ENCODE measurements at regions of chr11 and their contacts with region 1.

Region 1: DNA sequence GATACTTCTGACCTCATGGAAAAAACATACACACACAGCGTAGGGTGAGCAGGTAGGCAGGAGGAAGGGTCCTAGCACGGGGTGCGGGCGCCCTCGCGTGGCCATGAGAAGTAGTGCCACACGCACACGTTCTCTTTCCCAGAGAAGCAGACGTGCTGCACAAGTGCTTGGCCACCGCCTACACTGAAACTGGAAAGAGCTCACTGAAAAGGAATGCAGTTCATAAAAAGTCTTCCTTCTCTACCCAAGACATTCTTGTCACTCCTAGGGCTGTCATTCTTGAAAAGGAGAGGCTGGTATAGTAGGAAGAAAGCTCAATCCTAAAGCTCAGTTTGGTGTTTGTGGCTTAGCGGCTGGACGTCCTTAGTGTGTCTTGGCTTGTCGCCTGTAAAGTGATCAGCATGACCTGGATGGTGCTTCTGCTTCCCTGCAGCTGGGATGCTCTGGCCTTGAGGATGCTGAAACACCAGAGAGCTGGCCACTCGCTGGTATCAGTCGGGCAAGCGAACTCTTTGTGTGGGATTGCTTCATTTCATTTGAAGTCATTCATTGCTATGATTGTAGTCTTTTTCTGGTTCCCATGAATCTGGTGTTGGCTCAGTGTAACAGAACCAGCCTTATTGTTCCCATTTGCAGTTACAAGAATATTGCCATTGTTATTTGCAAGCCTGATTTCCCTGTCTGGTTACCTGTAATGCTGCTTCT is 303.8 kb downstream of the NTM start:
- DNase-seq: peak; percentile 85 to 94 (median 90)
- H3K4me3 ChIP-seq: peak overlapping the region in 23 of 59 donors; percentile 5 to 58 (median 28)
- H3K27ac ChIP-seq: peak overlapping the region; percentile 46 to 95 (median 84)
- H3K27me3 ChIP-seq: no peaks in the 10 kb centered on the region
- CTCF ChIP-seq: peak; percentile 93 to 100 (median 98)

Region 2: GRCh38 chr11:130924770-130925169 is 749.4 kb before region 1 on chr11:
- intact Hi-C with region 1: loop called (anchors 5 to 10 kb)
- DNase-seq: no peak
- H3K4me3 ChIP-seq: no peak overlapping the region
- H3K27ac ChIP-seq: no peak overlapping the region
- H3K27me3 ChIP-seq: no peaks in the 10 kb centered on the region
- CTCF ChIP-seq: no peak

Region 3: GRCh38 chr11:131246663-131247062 is 427.5 kb before region 1 on chr11:
- intact Hi-C with region 1: loop called (anchors 5 to 10 kb)
- DNase-seq: peak; percentile 7 to 85 (median 72)
- H3K4me3 ChIP-seq: peak overlapping the region in 55 of 59 donors; percentile 17 to 65 (median 43)
- H3K27ac ChIP-seq: peak overlapping the region in 4 of 59 donors; percentile 12 to 44 (median 39)
- H3K27me3 ChIP-seq: peaks cover 0 to 8% (median 0%) of the 10 kb centered on the region in 45 donors
- CTCF ChIP-seq: peak in 55 of 56 donors; percentile 42 to 89 (median 76)

Region 4: DNA sequence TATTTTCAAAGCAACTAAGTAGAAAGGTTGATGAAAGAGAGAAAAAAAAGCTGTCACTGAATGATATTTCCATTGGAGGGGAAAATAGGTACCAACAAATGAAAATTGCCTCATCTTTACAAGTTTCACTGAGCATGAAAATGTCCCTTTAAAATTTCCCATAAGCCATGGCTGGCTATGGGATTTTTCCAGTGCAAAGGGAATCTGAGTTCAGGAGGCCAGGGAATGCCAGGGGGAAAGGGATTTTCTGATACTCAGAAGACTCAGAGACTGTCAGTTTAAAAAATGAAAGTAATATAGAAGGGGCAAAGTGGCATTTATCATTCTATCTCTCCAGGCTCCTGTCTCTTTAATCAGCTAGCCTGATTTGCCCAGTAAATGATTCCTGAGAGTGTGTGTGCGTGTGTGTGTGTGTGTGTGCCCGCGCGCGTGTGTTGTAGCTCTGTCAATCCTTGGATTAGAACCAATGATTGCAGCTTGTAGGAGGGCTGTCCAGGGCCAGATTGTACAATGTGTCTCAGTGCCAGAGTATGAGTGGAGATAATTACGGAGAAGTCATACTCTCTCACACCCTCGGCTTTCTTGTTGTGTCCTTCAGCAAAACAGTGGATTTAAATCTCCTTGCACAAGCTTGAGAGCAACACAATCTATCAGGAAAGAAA is 304.0 kb before region 1 on chr11 and contains the start of gene NTM:
- intact Hi-C with region 1: loop called (anchors 5 to 10 kb)
- DNase-seq: peak; percentile 38 to 88 (median 74)
- H3K4me3 ChIP-seq: peak within 1 kb of the TSS; percentile 38 to 86 (median 68)
- H3K27ac ChIP-seq: peak within 1 kb of the TSS in 52 of 59 donors; percentile 2 to 86 (median 68)
- H3K27me3 ChIP-seq: peaks cover 0 to 13% (median 0%) of the 10 kb centered on the region in 45 donors
- CTCF ChIP-seq: peak in 4 of 56 donors; percentile 14 to 25 (median 20)
- total RNA-seq, gene NTM: 122 to 220 (median 161) TPM

Region 5: DNA sequence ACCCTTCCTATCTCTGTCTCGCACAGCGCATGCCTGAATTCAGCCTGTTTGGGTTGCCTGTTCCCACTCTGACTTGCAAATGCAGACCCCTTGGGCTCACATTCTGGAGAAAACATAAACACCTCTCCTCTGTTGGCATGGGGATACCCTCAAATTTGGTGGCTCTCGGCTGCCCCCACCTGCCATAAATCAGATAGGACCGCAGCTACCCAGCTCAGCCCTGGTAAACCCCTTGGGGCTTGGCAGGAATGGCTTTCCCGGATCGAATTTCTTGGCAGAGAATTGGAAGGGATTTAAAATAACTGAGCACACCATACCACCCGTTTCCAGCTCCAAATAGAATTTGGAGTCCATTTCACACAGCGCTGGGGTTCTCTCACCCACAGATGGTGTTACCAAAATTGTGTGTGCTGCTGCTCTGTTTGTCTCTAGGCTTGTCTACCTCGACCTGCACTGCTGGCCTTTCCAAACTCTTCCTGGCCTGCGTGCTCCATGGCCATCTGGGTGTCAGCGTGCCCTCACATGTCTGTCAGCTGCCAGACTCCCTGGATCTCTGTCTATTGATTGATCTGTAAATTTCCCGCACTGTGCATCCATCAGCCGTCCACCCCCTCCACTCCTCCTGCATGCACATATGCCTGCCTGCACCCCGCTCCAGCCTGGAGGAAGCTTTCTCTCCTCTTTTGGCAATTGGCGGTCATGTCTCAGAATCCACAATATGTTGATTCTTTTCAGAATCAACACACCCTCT is 169.8 kb before region 1 on chr11:
- intact Hi-C with region 1: loop called in 1 of 2 experiments (anchors 10 kb)
- DNase-seq: peak; percentile 26 to 84 (median 76)
- H3K4me3 ChIP-seq: peak overlapping the region in 22 of 59 donors; percentile 3 to 41 (median 24)
- H3K27ac ChIP-seq: peak overlapping the region in 54 of 59 donors; percentile 2 to 86 (median 68)
- H3K27me3 ChIP-seq: no peaks in the 10 kb centered on the region
- CTCF ChIP-seq: peak; percentile 15 to 80 (median 65)